Heart right ventricle (tissue), 16 donors: ENCODE measurements at regions of chr2 and their contacts with region 1.

Region 1: DNA sequence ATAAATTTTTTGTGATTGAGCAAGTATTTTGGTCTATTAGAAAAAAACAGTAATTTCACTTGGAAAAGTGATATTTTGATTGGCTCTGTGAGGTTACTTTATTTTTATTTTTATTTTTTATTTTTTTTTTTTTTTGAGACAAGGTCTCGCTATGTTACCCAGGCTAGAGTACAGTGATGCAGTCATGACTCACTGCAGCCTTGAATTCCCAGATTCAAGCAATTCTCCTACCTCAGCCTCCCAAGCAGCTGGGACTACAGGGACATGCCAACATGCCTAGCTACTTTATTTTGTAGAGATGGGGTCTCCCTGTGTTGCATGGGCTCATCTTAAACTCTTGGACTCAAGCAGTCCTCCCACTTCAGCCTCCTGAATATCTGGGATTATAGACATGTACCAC is 60.9 kb upstream of the MGAT5 start:
- DNase-seq: no peak
- ATAC-seq: no peak
- H3K4me3 ChIP-seq: no peak overlapping the region
- H3K27ac ChIP-seq: no peak overlapping the region
- H3K4me1 ChIP-seq: peaks cover 2 to 65% (median 42%) of the 10 kb centered on the region in 9 donors
- H3K27me3 ChIP-seq: no peaks in the 10 kb centered on the region
- CTCF ChIP-seq: no peak

Region 2: GRCh38 chr2:134127496-134127895 is 65.5 kb before region 1 on chr2:
- intact Hi-C with region 1: loop called in 2 of 10 experiments (anchors 5 to 10 kb)
- DNase-seq: no peak
- ATAC-seq: peak in 3 of 8 donors; percentile 23 to 46 (median 34)
- H3K4me3 ChIP-seq: no peak overlapping the region
- H3K27ac ChIP-seq: no peak overlapping the region
- H3K4me1 ChIP-seq: peaks cover 12 to 88% (median 77%) of the 10 kb centered on the region in 9 donors
- H3K27me3 ChIP-seq: no peaks in the 10 kb centered on the region
- CTCF ChIP-seq: no peak

Region 3: DNA sequence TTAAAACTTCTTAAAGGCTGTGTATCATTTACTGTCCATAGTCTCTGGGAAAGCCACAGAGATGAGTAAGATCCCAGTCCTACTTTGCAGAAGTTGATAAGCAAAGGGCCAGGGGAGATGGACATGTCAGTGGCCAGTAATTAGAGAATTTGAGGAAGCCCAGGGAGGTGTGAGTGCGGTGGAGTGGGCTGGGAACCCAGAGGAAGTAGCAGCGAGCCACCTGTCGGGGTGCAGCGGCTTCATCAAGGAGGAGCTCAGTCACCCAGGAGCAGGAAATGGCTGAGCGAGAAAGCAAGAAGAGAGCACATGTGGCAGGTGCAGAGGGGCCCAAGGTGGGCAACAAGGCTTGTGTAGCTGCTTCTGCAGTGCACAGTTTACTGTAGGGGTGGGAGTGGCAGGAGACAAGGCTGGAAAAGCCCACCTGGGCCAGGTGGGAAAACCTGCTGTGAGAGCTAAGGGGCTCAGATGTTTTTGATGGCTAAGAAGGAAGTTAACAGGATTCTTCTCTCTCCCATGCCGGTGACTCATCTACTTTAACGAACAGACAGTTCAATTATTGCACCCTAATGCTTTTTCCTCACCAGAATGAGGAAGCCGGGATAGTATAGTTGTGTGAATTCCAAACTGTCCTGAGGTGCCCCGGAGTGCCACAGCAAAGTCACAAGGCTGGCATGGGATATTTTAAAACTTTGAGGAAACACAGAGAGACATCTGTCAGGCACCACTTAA is 26.1 kb after region 1 on chr2:
- intact Hi-C with region 1: loop called in 1 of 10 experiments (anchors 1 kb)
- DNase-seq: peak in 1 of 2 donors; percentile 45
- ATAC-seq: peak in 7 of 8 donors; percentile 71 to 93 (median 87)
- H3K4me3 ChIP-seq: no peak overlapping the region
- H3K27ac ChIP-seq: peak overlapping the region in 9 of 10 donors; percentile 9 to 78 (median 64)
- H3K4me1 ChIP-seq: peaks cover 6 to 81% (median 52%) of the 10 kb centered on the region in 9 donors
- H3K27me3 ChIP-seq: no peaks in the 10 kb centered on the region
- CTCF ChIP-seq: no peak

Region 4: GRCh38 chr2:134301099-134301927 is 108.3 kb after region 1 on chr2:
- intact Hi-C with region 1: no loop called
- DNase-seq: no peak
- ATAC-seq: peak; percentile 77 to 93 (median 87)
- H3K4me3 ChIP-seq: peak overlapping the region in 4 of 10 donors; percentile 5 to 25 (median 21)
- H3K27ac ChIP-seq: peak overlapping the region in 9 of 10 donors; percentile 45 to 87 (median 67)
- H3K4me1 ChIP-seq: peaks cover 0 to 66% (median 36%) of the 10 kb centered on the region in 9 donors
- H3K27me3 ChIP-seq: no peaks in the 10 kb centered on the region
- CTCF ChIP-seq: no peak

Region 5: GRCh38 chr2:134609924-134610513 is 417.0 kb after region 1 on chr2:
- intact Hi-C with region 1: no loop called
- DNase-seq: no peak
- ATAC-seq: no peak
- H3K4me3 ChIP-seq: no peak overlapping the region
- H3K27ac ChIP-seq: no peak overlapping the region
- H3K4me1 ChIP-seq: no peaks in the 10 kb centered on the region
- H3K27me3 ChIP-seq: no peaks in the 10 kb centered on the region
- CTCF ChIP-seq: no peak